HCT116 (cell line): ENCODE measurements at regions of chr18 and their contacts with region 1.

Region 1: DNA sequence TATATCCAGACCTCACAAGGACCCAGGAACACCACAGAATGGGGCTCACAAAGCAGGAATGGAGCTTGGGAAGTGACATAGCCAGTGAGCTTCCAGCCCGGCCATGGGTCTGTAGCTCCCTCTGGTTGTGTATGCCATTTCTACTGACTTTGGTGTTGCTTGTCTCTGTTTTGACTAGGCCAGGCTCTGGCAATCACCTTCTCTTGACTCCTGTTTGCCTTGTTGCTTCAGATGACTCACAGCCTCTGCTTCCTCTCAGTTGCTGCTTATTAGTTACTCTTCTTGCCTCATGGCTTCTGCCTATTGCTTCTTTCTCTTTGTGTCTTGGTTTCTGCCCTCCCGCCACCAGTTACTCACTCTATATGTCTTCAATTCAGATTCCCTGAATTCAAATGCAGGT is 15.8 kb upstream of the IER3IP1 start:
- DNase-seq: no peak
- ATAC-seq: no peak
- H3K4me3 ChIP-seq: no peak overlapping the region
- H3K27ac ChIP-seq: no peak overlapping the region
- H3K4me1 ChIP-seq: no peaks in the 10 kb centered on the region
- H3K27me3 ChIP-seq: no peaks in the 10 kb centered on the region; the same call in none of the 2 replicates
- CTCF ChIP-seq: no peak
- POLR2A ChIP-seq: no peak
- RAD21 ChIP-seq: peak; percentile 14; the same call in 1 of the 2 replicates

Region 2: DNA sequence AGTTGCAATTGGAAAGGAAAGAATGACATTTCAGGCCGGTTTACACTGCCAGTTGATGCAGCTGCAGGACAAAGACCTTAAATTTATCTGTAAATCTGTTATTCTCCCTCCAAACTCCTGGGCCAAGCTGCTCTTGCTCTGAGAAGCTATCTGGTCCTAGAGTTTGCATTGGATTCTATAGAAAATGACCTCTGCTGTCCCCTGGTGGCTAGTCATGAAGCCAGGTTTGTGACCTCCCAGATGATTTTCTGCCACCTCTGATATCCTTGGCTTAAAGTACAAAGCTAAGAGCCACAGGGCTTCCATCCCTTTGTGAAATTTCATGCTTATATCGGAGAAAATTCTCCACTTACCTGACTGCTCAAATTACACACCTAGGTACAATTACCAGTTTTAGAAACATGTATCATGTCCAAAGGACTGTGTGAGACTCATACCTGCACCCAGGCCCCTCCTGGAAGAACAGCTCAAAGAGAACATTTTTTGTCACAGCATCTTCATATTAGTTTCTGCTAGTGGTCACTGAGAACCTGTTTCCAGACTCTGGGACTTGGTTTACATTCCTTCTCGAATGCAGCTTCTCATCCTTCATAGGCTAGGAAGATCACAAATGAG is 13.1 kb after region 1 on chr18:
- CTCF ChIA-PET with region 1: interaction called, 11 read pairs
- POLR2A ChIA-PET with region 1: no interaction called
- RAD21 ChIA-PET with region 1: no interaction called
- intact Hi-C with region 1: no loop called
- DNase-seq: peak; percentile 29
- ATAC-seq: peak; percentile 86
- H3K4me3 ChIP-seq: no peak overlapping the region
- H3K27ac ChIP-seq: no peak overlapping the region
- H3K4me1 ChIP-seq: no peaks in the 10 kb centered on the region
- H3K27me3 ChIP-seq: peaks cover 44% of the 10 kb centered on the region
- CTCF ChIP-seq: peak; percentile 77 to 87 (median 86); a peak in 5 of 6 replicates
- POLR2A ChIP-seq: no peak
- RAD21 ChIP-seq: peak; percentile 77

Region 3: GRCh38 chr18:47457614-47458013 is 265.7 kb after region 1 on chr18:
- CTCF ChIA-PET with region 1: no interaction called
- POLR2A ChIA-PET with region 1: no interaction called
- RAD21 ChIA-PET with region 1: no interaction called
- intact Hi-C with region 1: no loop called
- DNase-seq: no peak
- ATAC-seq: no peak
- H3K4me3 ChIP-seq: no peak overlapping the region
- H3K27ac ChIP-seq: no peak overlapping the region
- H3K4me1 ChIP-seq: no peaks in the 10 kb centered on the region
- H3K27me3 ChIP-seq: peaks cover 36% of the 10 kb centered on the region
- CTCF ChIP-seq: no peak
- POLR2A ChIP-seq: no peak
- RAD21 ChIP-seq: no peak